ENCODE measurements at regions of chrX and their contacts with region 1.

Region 1: DNA sequence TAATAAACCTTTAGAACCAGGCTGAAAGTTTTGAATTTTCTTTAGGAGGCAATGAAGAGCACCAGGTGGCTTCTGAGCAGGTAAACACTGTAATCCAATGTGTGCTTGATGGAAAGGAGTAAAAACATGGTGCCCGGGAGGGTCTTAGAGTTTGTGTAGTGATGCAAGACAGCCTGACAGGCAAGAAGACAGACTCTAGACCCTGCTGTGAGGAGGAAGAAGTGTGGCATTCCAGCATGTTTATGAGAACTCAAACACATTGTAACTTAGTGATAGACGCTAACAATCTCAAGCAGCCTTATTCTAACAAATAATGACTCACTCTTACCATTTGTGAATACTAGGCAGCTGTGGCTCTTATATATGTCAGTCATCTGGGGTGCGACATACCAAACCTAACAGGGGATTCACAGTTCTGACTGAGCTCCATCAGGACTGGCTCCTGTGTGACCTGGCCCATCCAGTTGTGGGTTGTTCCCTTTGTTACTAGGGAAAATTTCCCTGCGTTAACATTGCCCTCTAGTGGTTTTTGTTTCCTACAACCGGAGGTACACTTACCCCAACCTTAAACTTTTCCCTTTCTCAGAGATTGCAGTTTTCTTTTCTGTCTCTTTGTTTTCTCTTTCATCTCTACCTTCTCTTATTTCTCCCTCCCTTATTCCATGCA is 53.8 kb downstream of the VSIG4 start:
- H3K4me3 ChIP-seq: no peak overlapping the region
- H3K27ac ChIP-seq: no peak overlapping the region
- H3K4me1 ChIP-seq: no peaks in the 10 kb centered on the region
- CTCF ChIP-seq: peak; percentile 34; the same call in 1 of the 2 replicates

Region 2: DNA sequence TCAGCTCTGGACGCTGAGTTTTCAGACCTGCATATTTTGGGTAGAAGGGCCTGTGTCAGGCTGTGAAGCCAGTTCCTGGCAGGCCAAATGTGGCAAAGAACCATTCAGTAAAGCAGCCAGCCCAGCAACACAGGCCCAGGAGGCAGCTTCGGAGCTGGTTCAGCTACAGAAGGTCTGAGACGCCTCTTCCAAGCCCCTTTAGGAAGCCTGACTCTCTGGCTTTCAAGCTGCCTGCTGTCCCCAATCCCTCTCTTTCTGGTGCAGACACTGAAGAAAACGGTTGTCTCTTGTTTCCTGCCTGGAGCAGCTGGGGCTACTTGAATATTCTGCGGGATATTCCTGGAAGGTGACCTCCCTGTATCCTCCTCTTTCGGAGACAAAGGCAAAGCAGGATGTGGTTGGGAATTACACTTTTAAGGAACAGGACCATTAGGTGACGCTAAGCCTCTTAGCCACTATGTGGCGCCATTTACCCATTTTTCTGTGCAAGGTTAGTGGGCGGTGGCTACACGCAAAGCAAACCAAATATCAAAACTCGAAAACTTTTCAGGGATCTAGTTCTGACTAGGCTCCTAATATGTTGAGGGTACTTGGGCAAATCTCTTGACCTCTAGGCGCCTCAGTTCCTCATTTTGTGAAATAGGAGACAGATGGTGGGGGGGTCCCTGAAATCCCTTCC is 404.3 kb before region 1 on chrX:
- CTCF ChIA-PET with region 1: interaction called, 26 read pairs
- POLR2A ChIA-PET with region 1: no interaction called
- H3K4me3 ChIP-seq: no peak overlapping the region
- H3K27ac ChIP-seq: no peak overlapping the region
- H3K4me1 ChIP-seq: no peaks in the 10 kb centered on the region
- CTCF ChIP-seq: peak; percentile 78